Panc1 (cell line): ENCODE measurements at regions of chr2 and their contacts with region 1.

Region 1: GRCh38 chr2:19036091-19036490 is 322.3 kb downstream of the OSR1 start:
- DNase-seq: no peak
- ATAC-seq: no peak
- H3K4me3 ChIP-seq: no peak overlapping the region
- H3K27ac ChIP-seq: no peak overlapping the region
- H3K4me1 ChIP-seq: no peaks in the 10 kb centered on the region
- H3K27me3 ChIP-seq: no peaks in the 10 kb centered on the region
- CTCF ChIP-seq: no peak

Region 2: GRCh38 chr2:18814387-18814786 is 221.7 kb before region 1 on chr2:
- CTCF ChIA-PET with region 1: no interaction called
- POLR2A ChIA-PET with region 1: no interaction called
- in situ Hi-C with region 1: no loop called
- intact Hi-C with region 1: no loop called
- DNase-seq: no peak
- ATAC-seq: no peak
- H3K4me3 ChIP-seq: no peak overlapping the region
- H3K27ac ChIP-seq: no peak overlapping the region
- H3K4me1 ChIP-seq: no peaks in the 10 kb centered on the region
- H3K27me3 ChIP-seq: no peaks in the 10 kb centered on the region
- CTCF ChIP-seq: no peak

Region 3: DNA sequence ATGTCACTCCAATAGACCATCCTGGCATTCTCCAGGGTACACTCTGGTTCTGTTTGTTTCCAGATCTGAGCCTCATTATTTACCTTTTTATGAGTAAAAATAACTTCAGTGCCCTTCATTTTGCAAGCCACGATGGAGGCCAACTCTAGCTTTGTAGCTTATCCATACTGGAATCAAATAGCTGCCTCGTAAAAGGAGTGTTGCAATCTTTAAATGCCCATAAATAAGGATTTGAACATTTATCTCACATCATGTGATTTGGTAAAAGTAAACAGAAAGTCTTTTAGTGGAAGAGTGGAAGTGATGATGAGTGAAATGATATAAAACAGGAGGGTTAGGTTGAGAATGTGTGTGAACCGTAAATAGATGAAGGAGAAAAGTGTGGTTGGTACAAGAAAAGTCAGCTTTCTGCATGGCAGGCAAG is 26.6 kb before region 1 on chr2:
- CTCF ChIA-PET with region 1: no interaction called
- POLR2A ChIA-PET with region 1: no interaction called
- in situ Hi-C with region 1: no loop called
- intact Hi-C with region 1: loop called (anchors 2 kb)
- DNase-seq: no peak
- ATAC-seq: no peak
- H3K4me3 ChIP-seq: no peak overlapping the region
- H3K27ac ChIP-seq: no peak overlapping the region
- H3K4me1 ChIP-seq: no peaks in the 10 kb centered on the region
- H3K27me3 ChIP-seq: no peaks in the 10 kb centered on the region
- CTCF ChIP-seq: no peak

Region 4: DNA sequence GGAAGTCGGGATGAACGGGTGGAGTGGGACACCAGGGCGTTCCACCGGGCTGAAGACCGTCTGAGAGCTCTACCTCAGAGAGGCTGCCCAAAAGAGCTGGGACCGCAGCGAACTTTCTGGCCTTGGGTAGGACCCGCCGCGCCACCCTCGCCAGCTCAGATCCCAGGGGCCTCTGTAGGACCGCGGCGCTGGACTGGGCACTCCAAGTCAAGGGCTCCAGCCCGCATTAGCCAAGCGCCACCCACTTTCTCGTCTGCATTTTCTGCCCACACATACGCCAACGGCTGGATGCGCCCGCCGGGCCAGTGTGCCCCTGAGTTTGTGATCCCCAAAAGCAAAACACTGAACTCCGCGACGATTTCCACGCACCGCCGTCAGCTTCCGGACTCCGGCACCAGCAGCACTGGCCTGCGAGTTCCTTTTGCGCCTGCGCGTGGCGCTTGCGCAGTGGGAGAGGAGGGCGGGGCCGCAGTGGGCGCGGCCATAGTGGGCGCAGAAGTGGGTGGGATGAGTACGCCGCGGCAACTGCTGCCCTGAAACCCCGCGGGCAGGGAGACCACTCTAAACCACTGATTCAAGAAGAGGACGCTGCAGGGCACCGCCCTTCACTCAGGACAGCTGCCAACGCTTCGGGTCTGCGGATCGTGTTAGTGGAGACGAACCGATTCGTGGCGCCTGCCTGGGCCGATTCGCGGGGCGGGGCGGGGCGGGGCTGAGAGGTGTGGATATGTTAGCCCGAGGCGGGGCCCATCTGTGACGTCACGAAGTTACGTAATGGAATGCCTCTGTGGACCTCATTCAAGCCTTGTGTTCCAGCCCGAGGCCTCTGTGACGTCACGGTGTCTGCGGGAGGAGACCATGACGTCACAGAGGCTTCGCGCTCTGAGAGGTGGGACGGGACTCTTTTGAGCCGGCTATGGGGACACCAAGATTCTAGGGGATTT is 311.8 kb after region 1 on chr2:
- CTCF ChIA-PET with region 1: no interaction called
- POLR2A ChIA-PET with region 1: no interaction called
- in situ Hi-C with region 1: no loop called
- intact Hi-C with region 1: no loop called
- DNase-seq: peak; percentile 84
- ATAC-seq: peak; percentile 94
- H3K4me3 ChIP-seq: peak overlapping the region; percentile 79 to 96
- H3K27ac ChIP-seq: peak overlapping the region; percentile 97
- H3K4me1 ChIP-seq: no peaks in the 10 kb centered on the region; the same call in 1 of the 2 replicates
- H3K27me3 ChIP-seq: no peaks in the 10 kb centered on the region
- CTCF ChIP-seq: no peak